ENCODE measurements at regions of chr1 and their contacts with region 1.

Region 1: DNA sequence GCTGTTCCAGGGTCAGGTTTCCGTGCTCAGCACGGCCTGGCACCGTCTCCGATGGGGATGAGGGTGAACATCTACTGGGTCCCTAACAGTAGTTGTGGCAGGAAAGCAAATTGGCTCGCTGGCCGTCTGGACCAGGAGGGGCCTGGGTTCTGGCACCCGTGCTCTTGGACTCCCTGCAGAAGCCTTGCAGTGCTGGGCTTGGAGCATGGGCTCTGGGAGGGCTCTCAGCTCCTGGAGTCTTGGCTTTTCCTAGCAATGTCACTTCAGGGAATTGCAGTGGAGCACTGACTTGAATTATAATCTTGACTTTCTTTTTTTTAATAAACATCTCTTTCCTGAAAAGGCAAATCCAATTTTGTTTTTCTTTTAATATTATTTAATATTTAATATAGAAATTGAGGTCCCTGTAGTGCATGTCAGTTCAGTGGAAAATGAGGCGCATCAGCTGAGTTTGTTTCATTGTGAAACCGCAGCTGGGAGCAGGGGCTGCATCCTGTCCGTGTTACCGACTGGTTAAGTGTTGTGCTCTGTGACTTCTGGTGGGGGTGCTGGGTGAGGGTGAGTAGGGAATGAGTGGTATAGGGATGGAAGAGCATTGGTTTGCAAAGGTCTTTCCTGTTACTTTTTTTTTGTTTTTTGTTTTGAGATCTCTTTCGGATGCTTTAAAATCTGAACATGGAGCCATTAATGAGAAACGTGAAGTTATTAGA is 64.1 kb downstream of the PEX14 start:
- DNase-seq: no peak
- H3K4me3 ChIP-seq: no peak overlapping the region
- H3K27ac ChIP-seq: no peak overlapping the region; a peak in 1 of 4 replicates
- H3K4me1 ChIP-seq: peaks cover 7 to 32% of the 10 kb centered on the region in 2 experiments; a peak in 3 of 4 replicates
- H3K27me3 ChIP-seq: no peaks in the 10 kb centered on the region
- CTCF ChIP-seq: no peak
- EP300 ChIP-seq: no peak
- RAD21 ChIP-seq: no peak

Region 2: DNA sequence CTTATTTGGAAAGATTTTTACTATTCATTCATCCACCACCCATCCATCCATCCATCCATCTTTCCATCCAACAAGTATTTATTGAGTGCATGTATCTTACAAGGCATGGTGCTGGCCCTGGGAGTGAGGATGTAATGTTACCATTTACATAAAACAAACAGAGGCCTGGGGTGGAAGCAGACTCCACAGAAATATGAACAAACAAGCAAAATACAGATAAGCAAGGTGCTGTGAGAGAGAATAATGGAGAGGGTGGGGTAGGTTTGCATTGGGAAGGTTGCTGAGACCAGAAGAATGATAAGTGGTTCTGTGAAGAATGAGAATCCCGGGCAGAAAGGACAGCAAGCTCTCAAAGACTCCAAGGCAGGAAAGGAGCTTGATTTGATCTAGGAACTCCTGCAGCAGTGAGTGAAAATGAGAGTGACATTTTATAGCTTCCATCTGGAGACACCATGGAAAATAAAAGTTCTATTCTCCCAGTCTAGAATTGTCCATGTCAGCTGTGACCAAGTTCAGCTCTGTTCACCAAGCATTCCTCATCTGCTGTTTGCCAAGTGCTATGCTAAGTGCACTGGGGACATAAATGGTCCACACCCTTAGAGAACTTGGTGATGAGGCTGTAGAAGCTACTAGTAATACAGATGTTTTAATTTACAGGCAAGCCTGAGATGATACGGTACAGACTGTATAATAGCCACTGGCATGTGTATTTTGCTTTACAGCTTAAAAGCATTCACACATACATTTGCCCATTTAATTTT is 11.3 kb after region 1 on chr1:
- CTCF ChIA-PET with region 1: interaction called, 11 read pairs
- POLR2A ChIA-PET with region 1: interaction called, 4 read pairs
- DNase-seq: no peak
- H3K4me3 ChIP-seq: no peak overlapping the region
- H3K27ac ChIP-seq: no peak overlapping the region
- H3K4me1 ChIP-seq: peaks cover 0 to 11% of the 10 kb centered on the region in 2 experiments; a peak in 1 of 4 replicates
- H3K27me3 ChIP-seq: no peaks in the 10 kb centered on the region
- CTCF ChIP-seq: no peak
- EP300 ChIP-seq: no peak
- RAD21 ChIP-seq: no peak